Dorsolateral prefrontal cortex (tissue), 120 donors: ENCODE measurements at regions of chr16 and their contacts with region 1.

Region 1: GRCh38 chr16:55543472-55543871 is 23.0 kb upstream of the CAPNS2 start:
- DNase-seq: no peak
- H3K4me3 ChIP-seq: no peak overlapping the region
- H3K27ac ChIP-seq: no peak overlapping the region
- H3K27me3 ChIP-seq: no peaks in the 10 kb centered on the region
- CTCF ChIP-seq: peak in 55 of 56 donors; percentile 41 to 88 (median 68)

Region 2: GRCh38 chr16:55465077-55465896 is 78.2 kb before region 1 on chr16:
- intact Hi-C with region 1: loop called (anchors 1 to 10 kb)
- DNase-seq: peak; percentile 79 to 93 (median 88)
- H3K4me3 ChIP-seq: peak overlapping the region in 22 of 59 donors; percentile 1 to 50 (median 26)
- H3K27ac ChIP-seq: no peak overlapping the region
- H3K27me3 ChIP-seq: no peaks in the 10 kb centered on the region
- CTCF ChIP-seq: peak; percentile 99 to 100 (median 100)

Region 3: DNA sequence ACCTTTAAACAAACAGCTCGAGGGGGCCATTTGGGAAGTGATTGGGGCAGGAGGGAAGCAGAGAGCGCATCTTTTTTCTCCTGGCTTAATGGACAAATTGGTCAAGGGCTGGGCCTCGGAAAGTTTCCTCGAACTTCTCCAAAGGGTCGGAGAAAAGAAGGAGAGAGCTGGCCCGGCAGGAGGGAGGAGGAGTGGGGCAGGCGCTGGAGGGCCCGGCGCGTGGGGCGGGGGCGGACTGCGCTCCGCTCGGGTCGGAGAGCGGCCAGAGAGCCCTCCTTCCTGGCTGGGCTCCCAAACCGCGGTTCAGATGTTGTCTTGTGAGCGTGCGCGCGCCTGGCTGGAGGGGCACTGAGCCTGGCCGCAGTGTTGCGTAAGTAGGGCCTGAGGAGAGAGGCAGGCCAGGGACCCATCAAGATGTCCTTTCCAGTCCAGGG is 63.2 kb before region 1 on chr16:
- intact Hi-C with region 1: no loop called
- DNase-seq: peak in 6 of 10 donors; percentile 39 to 60 (median 50)
- H3K4me3 ChIP-seq: peak overlapping the region in 52 of 59 donors; percentile 12 to 71 (median 52)
- H3K27ac ChIP-seq: no peak overlapping the region
- H3K27me3 ChIP-seq: peaks cover 0 to 28% (median 9%) of the 10 kb centered on the region in 45 donors
- CTCF ChIP-seq: no peak

Region 4: DNA sequence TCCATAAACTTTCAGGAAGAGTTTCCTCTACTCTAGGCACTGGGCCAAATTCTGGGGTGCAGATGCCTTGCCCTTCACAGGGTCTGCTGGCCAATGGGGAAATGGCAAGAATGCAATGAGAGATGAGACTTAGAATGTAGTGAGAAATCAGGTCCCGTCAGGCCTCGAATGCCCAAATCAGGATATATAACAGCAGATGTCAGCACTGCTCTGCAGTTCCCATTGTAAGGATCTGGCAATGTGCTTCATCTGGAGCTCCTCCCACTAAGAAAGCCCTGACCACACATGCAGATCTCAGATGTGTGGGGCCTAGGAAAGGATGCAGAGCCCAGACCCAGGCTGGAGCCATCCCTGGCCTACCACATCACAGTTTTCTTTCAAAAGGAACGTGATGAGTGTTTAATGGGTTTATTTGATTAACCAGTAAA is 48.5 kb before region 1 on chr16:
- intact Hi-C with region 1: loop called (anchors 1 to 2 kb)
- DNase-seq: peak in 3 of 10 donors; percentile 34 to 74 (median 69)
- H3K4me3 ChIP-seq: no peak overlapping the region
- H3K27ac ChIP-seq: peak overlapping the region in 22 of 59 donors; percentile 2 to 70 (median 46)
- H3K27me3 ChIP-seq: no peaks in the 10 kb centered on the region
- CTCF ChIP-seq: peak in 55 of 56 donors; percentile 48 to 89 (median 67)

Region 5: DNA sequence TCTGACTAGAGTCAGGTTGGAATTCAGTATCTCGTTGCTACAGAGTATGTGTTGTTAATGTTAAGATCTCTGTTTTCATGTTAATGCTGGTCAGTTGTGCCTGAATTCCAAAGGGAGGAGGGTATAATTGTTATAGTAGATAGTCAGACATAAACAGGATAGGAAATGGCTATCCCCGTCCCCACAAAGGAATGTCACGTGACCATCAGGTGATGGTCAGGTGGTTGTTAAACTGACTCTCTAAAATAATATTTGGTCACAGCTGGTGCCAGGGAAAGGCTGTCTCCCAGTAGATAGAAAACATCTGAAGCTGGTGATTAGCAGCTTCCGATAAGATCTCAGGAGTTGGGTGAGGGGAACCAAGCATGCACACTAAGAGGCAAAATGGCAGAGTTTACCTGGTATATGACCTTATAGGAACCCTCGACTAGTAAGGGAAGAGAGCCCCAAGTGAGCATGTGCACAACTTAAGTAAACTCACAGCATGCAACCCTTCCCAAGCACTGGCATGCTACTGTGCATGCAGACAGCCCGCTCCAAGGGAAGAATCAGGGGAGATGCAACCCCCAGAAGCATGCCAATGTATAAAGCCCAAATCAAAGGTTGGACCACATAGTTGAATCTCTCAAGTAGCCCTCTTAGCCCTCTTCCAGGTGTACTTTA is 85.0 kb after region 1 on chr16:
- intact Hi-C with region 1: no loop called
- DNase-seq: no peak
- H3K4me3 ChIP-seq: no peak overlapping the region
- H3K27ac ChIP-seq: no peak overlapping the region
- H3K27me3 ChIP-seq: peaks cover 0 to 15% (median 0%) of the 10 kb centered on the region in 45 donors
- CTCF ChIP-seq: no peak

Region 6: DNA sequence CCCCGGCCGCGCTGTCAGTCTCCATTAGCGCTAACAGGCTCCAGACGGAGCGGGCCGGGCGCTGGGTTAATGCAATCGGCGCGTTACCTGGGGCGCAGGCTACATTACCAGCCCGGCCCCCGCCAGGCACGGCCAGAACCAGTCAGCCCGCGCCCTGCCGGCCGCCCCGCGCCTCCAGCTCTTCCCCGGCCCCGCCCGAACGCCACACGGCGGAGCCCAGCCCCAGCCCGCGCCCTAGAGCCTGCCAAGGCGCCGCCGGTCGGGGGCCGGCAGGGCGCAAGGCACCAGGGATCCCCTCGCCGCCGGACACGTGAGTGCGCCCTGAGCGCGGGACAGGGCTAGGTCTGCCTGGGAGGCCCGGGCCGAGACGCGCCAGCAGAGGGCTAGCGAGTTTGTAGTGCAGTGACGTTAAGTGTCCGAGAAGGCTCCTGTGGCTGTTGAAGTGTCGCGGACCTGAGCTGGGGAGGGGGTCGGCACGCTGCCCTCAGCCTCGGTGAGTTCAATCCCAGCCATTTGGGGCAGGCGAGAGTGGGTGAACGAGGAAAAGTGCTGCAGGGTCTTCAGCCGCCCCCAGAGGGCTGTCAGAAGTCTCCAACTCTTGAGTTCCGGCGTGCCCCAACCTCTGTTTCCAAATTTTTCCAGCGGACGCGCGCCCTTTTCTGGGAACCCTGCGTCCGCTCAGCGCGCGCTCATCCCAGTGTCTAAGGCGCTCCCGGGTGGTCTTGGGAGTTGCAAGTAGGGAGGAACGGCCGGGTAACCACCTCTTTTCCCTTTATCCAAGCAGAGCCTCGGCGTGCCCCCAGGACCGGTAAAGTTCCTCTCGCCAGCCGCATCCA is 112.6 kb after region 1 on chr16 and contains the start of gene SLC6A2:
- intact Hi-C with region 1: loop called in 1 of 2 experiments (anchors 10 kb)
- DNase-seq: no peak
- H3K4me3 ChIP-seq: peak within 1 kb of the TSS in 54 of 59 donors; percentile 10 to 62 (median 36)
- H3K27ac ChIP-seq: no peak within 1 kb of the TSS
- H3K27me3 ChIP-seq: peaks cover 0 to 63% (median 45%) of the 10 kb centered on the region in 45 donors
- CTCF ChIP-seq: peak in 4 of 56 donors; percentile 12 to 21 (median 14)
- total RNA-seq, gene SLC6A2: 0.14 to 0.44 (median 0.28) TPM in 17 of 120 experiments, not detected in the others

Region 7: GRCh38 chr16:55706739-55707384 is 163.4 kb after region 1 on chr16:
- intact Hi-C with region 1: loop called (anchors 2 to 5 kb)
- DNase-seq: no peak
- H3K4me3 ChIP-seq: no peak overlapping the region
- H3K27ac ChIP-seq: no peak overlapping the region
- H3K27me3 ChIP-seq: peaks cover 0 to 6% (median 0%) of the 10 kb centered on the region in 45 donors
- CTCF ChIP-seq: no peak